ENCODE measurements at regions of chr9 and their contacts with region 1.

Region 1: GRCh38 chr9:127396808-127397497 is at the start of gene SLC2A8:
- DNase-seq: peak; percentile 100
- H3K4me3 ChIP-seq: peak within 1 kb of the TSS; percentile 52 to 79 (median 72)
- H3K27ac ChIP-seq: peak within 1 kb of the TSS; percentile 35
- H3K4me1 ChIP-seq: peaks cover 12% of the 10 kb centered on the region
- H3K27me3 ChIP-seq: no peaks in the 10 kb centered on the region
- CTCF ChIP-seq: peak; percentile 4 to 30
- total RNA-seq, gene SLC2A8: 8.0 to 17.1 TPM

Region 2: GRCh38 chr9:126985870-126986498 is 411.0 kb before region 1 on chr9:
- CTCF ChIA-PET with region 1: no interaction called
- dilution Hi-C with region 1: loop called (anchors 5 kb)
- in situ Hi-C with region 1: no loop called
- intact Hi-C with region 1: no loop called
- DNase-seq: peak; percentile 96
- H3K4me3 ChIP-seq: no peak overlapping the region
- H3K27ac ChIP-seq: no peak overlapping the region
- H3K4me1 ChIP-seq: peaks cover 27% of the 10 kb centered on the region
- H3K27me3 ChIP-seq: peaks cover 39% of the 10 kb centered on the region
- CTCF ChIP-seq: no peak

Region 3: GRCh38 chr9:127214421-127215267 is 182.3 kb before region 1 on chr9:
- CTCF ChIA-PET with region 1: interaction called, 8 read pairs
- dilution Hi-C with region 1: no loop called
- in situ Hi-C with region 1: loop called in 1 of 2 experiments (anchors 10 kb)
- intact Hi-C with region 1: loop called (anchors 1 kb)
- DNase-seq: peak; percentile 52
- H3K4me3 ChIP-seq: no peak overlapping the region
- H3K27ac ChIP-seq: no peak overlapping the region
- H3K4me1 ChIP-seq: no peaks in the 10 kb centered on the region
- H3K27me3 ChIP-seq: no peaks in the 10 kb centered on the region
- CTCF ChIP-seq: peak; percentile 85 to 92

Region 4: DNA sequence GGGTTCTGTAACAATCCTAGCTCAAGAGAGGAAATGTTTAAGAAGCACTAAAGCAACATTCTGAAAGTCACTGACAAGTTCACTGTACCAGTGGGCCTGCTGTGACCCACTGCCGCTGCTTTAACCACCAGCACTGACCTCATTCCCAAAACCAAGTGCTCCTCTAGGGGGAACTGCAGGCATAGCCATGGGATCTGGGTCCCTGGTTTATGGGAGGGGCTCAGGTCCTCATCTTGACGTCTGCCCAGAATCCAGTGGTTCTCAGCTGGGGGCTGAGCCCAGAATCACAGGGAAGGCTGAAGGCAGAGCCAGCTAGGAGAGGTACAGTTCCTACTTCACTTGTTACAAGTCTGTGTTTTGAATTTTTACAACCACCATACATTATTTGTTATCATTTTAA is 36.1 kb before region 1 on chr9:
- CTCF ChIA-PET with region 1: no interaction called
- dilution Hi-C with region 1: loop called (anchors 5 kb)
- in situ Hi-C with region 1: no loop called
- intact Hi-C with region 1: loop called (anchors 1 kb)
- DNase-seq: peak; percentile 27
- H3K4me3 ChIP-seq: no peak overlapping the region
- H3K27ac ChIP-seq: peak overlapping the region; percentile 66
- H3K4me1 ChIP-seq: peaks cover 23% of the 10 kb centered on the region
- H3K27me3 ChIP-seq: no peaks in the 10 kb centered on the region
- CTCF ChIP-seq: peak; percentile 54 to 65

Region 5: DNA sequence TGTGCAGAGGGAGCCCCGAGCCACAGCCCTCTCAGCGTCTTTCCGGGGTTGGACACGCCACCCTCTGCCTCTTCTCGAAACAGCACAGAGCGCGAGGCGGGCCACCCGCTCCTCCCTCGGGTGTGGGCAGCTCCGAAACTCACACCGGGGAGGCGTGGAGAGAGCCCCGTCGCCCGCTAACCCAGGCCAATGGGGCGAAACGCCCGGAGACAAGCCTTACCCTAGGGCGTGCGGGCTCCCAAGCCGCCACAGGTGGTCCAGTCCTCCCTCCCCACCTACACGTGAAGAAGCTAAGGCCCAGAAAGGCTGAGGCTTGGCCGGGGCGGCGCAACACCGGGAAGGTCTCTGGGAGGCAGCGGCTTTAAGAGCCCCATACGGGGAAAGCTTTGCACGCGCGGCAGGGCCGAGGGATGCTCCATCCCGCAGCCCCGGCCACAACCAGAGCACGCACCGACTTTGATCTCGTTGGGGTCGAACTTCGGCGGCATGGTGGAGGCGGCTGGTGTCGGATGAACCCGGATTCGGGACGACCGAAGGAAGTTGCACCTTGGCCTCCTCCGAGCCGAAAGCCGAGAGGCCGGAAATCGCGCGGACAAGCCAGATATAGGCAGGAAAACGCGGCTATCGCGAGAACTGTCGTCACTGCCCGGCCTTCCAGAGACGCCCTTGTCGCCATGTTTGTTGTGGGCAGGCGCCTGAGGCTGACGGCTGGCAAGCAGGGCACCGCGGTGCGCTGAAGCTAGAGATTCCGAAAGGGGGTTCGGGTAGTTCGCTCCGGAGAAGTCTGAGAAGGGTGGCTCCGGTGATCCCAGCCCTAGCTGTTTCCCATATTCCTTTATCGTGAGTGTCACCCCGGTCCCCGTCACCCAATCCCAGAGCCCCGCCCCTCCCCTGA is 54.1 kb after region 1 on chr9 and contains the starts of genes LRSAM1 and RPL12:
- CTCF ChIA-PET with region 1: no interaction called
- dilution Hi-C with region 1: no loop called
- in situ Hi-C with region 1: no loop called
- intact Hi-C with region 1: loop called (anchors 2 kb)
- DNase-seq: peak; percentile 90
- H3K4me3 ChIP-seq: peak within 1 kb of the TSS; percentile 79 to 91 (median 90)
- H3K27ac ChIP-seq: peak within 1 kb of the TSS; percentile 80
- H3K4me1 ChIP-seq: peaks cover 26% of the 10 kb centered on the region
- H3K27me3 ChIP-seq: no peaks in the 10 kb centered on the region
- CTCF ChIP-seq: peak in 1 of 2 donors; percentile 3
- total RNA-seq, gene LRSAM1: 15.5 to 20.6 TPM
- total RNA-seq, gene RPL12: 1,316 to 1,441 TPM

Measured in mammary epithelial cell (primary cell).